PC-9 (cell line): ENCODE measurements at regions of chr5 and their contacts with region 1.

Region 1: GRCh38 chr5:132976852-132977251 is 13.4 kb upstream of the AFF4 start:
- DNase-seq: no peak
- H3K4me3 ChIP-seq: no peak overlapping the region
- H3K27ac ChIP-seq: no peak overlapping the region
- H3K4me1 ChIP-seq: peaks cover 19% of the 10 kb centered on the region
- H3K27me3 ChIP-seq: no peaks in the 10 kb centered on the region
- CTCF ChIP-seq: no peak

Region 2: DNA sequence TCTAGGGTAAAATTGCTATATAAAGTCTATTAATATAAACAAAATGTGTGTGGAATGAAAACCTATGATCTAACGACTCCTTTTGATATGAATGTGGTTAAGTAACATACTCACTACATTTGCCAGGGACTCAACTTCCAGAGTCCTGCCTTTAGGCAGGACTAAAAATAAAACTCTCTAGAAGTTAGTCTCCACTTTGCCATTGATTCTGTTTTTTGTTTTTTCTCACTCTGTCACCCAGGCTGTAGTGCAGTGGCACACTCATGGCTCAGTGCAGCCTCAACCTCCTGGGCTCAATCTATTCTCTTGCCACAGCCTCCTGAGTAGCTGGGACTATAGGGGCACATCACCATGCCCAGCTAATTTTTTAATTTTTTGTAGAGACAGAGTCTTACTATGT is 19.5 kb after region 1 on chr5:
- CTCF ChIA-PET with region 1: no interaction called
- POLR2A ChIA-PET with region 1: interaction called, 10 read pairs
- intact Hi-C with region 1: no loop called
- DNase-seq: no peak
- H3K4me3 ChIP-seq: no peak overlapping the region
- H3K27ac ChIP-seq: no peak overlapping the region
- H3K4me1 ChIP-seq: no peaks in the 10 kb centered on the region
- H3K27me3 ChIP-seq: no peaks in the 10 kb centered on the region
- CTCF ChIP-seq: no peak